T-cell (primary cell): ENCODE measurements at regions of chr2 and their contacts with region 1.

Region 1: GRCh38 chr2:199460017-199460671 is 2.4 kb upstream of the SATB2 start:
- DNase-seq: no peak
- ATAC-seq: no peak
- H3K4me3 ChIP-seq: peak overlapping the region; percentile 73 to 99
- H3K4me3 Mint-ChIP-seq: peak overlapping the region; percentile 87 to 97 (median 92)
- H3K27ac ChIP-seq: no peak overlapping the region
- H3K27ac Mint-ChIP-seq: peak overlapping the region; percentile 59 to 61
- H3K4me1 ChIP-seq: peaks cover 23 to 69% of the 10 kb centered on the region in 2 experiments
- H3K4me1 Mint-ChIP-seq: peaks cover 25 to 46% (median 42%) of the 10 kb centered on the region in 3 donors
- H3K27me3 ChIP-seq: peaks cover 13 to 75% of the 10 kb centered on the region in 2 experiments
- H3K27me3 Mint-ChIP-seq: peaks cover 34 to 66% of the 10 kb centered on the region in 2 donors

Region 2: GRCh38 chr2:197986977-197987376 is 1473.2 kb before region 1 on chr2:
- CTCF ChIA-PET with region 1: no interaction called
- POLR2A ChIA-PET with region 1: interaction called in 1 of 2 experiments, 11 read pairs
- DNase-seq: no peak
- ATAC-seq: no peak
- H3K4me3 ChIP-seq: no peak overlapping the region
- H3K4me3 Mint-ChIP-seq: no peak overlapping the region
- H3K27ac ChIP-seq: no peak overlapping the region
- H3K27ac Mint-ChIP-seq: no peak overlapping the region
- H3K4me1 ChIP-seq: no peaks in the 10 kb centered on the region
- H3K4me1 Mint-ChIP-seq: peaks cover 0 to 23% (median 12%) of the 10 kb centered on the region in 3 donors
- H3K27me3 ChIP-seq: no peaks in the 10 kb centered on the region
- H3K27me3 Mint-ChIP-seq: no peaks in the 10 kb centered on the region

Region 3: DNA sequence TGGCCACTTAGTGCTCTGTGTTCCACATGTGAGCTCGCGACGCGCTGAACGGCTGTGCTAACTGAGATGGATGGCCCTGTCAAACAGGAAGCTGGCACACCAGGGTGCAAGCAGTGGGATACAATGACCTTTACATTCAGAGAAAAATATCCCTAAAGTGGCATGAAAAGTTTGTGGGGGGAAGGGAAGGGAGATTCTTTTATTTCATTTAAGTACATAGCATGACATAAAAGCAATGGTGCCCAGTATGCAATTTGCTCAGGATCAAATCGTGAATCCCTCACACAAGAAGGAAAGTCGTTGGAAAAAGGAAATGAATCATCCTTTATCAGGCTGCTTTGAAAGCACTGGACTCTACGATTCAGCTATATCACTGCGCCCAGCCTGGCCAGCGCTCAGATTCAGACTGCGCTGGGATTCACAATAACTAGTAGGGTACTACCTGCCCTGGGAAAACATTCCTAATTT is 28.4 kb before region 1 on chr2:
- CTCF ChIA-PET with region 1: no interaction called
- POLR2A ChIA-PET with region 1: no interaction called
- DNase-seq: no peak
- ATAC-seq: no peak
- H3K4me3 ChIP-seq: no peak overlapping the region
- H3K4me3 Mint-ChIP-seq: no peak overlapping the region
- H3K27ac ChIP-seq: no peak overlapping the region
- H3K27ac Mint-ChIP-seq: no peak overlapping the region
- H3K4me1 ChIP-seq: no peaks in the 10 kb centered on the region
- H3K4me1 Mint-ChIP-seq: no peaks in the 10 kb centered on the region
- H3K27me3 ChIP-seq: peaks cover 2 to 4% of the 10 kb centered on the region in 2 experiments
- H3K27me3 Mint-ChIP-seq: peaks cover 19 to 32% of the 10 kb centered on the region in 2 donors